ENCODE measurements at regions of chr2 and their contacts with region 1.

Region 1: DNA sequence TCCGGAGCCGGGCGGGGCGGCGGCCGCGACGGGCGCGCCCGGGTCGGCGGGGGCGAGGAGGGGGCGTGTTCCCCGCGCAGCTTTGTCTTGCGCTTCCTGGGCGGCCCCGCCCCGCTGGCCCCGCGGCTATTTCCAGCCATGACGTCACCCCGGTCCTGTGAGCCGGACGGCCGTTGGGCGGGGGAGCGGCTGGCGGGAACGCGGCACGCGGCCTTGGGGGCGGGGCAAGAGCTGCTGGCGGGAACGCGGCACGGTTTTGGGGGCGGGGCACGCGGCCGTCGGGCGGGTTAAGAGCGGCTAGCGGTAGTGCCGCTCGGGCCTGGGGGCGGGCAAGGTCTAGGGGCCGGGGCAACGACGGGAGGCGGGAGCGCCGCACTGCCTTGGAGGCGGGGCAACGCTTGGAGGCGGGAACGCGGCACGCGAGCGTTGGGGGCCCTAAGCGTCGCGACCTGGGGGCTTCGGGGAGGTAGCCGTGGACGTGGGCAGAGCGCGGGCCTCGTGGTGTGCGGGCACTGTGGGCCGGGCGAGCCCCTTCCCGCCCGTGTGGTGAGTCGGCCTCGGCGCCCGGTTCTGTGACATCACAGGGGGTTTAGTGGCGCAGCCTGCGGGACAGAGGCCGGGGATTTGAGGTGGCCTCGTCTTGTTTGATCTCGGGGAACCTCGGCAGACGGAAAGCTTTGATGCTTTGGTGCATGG is 704 bp downstream of the KLF11 start:
- DNase-seq: peak; percentile 97
- ATAC-seq: peak; percentile 61
- H3K4me3 ChIP-seq: peak overlapping the region in 4 of 5 experiments; percentile 40 to 68 (median 58)
- H3K4me3 Mint-ChIP-seq: peak overlapping the region; percentile 87
- H3K27ac ChIP-seq: peak overlapping the region; percentile 58 to 84
- H3K27ac Mint-ChIP-seq: peak overlapping the region; percentile 82
- H3K4me1 ChIP-seq: peaks cover 12 to 20% of the 10 kb centered on the region in 2 donors
- H3K4me1 Mint-ChIP-seq: peaks cover 26% of the 10 kb centered on the region
- H3K27me3 ChIP-seq: no peaks in the 10 kb centered on the region
- H3K27me3 Mint-ChIP-seq: no peaks in the 10 kb centered on the region
- CTCF ChIP-seq: no peak

Region 2: GRCh38 chr2:8836971-8837794 is 1206.9 kb before region 1 on chr2 and contains the start of gene KIDINS220:
- CTCF ChIA-PET with region 1: no interaction called
- POLR2A ChIA-PET with region 1: no interaction called
- intact Hi-C with region 1: loop called (anchors 10 kb)
- DNase-seq: peak; percentile 92
- ATAC-seq: peak; percentile 98
- H3K4me3 ChIP-seq: peak within 1 kb of the TSS; percentile 36 to 93 (median 84)
- H3K4me3 Mint-ChIP-seq: peak within 1 kb of the TSS; percentile 98
- H3K27ac ChIP-seq: peak within 1 kb of the TSS; percentile 36 to 75
- H3K27ac Mint-ChIP-seq: peak within 1 kb of the TSS; percentile 98
- H3K4me1 ChIP-seq: peaks cover 24 to 25% of the 10 kb centered on the region in 2 donors
- H3K4me1 Mint-ChIP-seq: peaks cover 36% of the 10 kb centered on the region
- H3K27me3 ChIP-seq: no peaks in the 10 kb centered on the region
- H3K27me3 Mint-ChIP-seq: peaks cover 4% of the 10 kb centered on the region
- CTCF ChIP-seq: no peak
- total RNA-seq, gene KIDINS220: 36.6 and 43.6 TPM in 2 replicates

Region 3: GRCh38 chr2:9630749-9631483 is 413.1 kb before region 1 on chr2 and contains the start of gene YWHAQ:
- CTCF ChIA-PET with region 1: no interaction called
- POLR2A ChIA-PET with region 1: interaction called, 3 read pairs
- intact Hi-C with region 1: loop called (anchors 1 kb)
- DNase-seq: peak; percentile 100
- ATAC-seq: peak; percentile 91
- H3K4me3 ChIP-seq: peak within 1 kb of the TSS; percentile 54 to 89 (median 69)
- H3K4me3 Mint-ChIP-seq: peak within 1 kb of the TSS; percentile 94
- H3K27ac ChIP-seq: peak within 1 kb of the TSS; percentile 76 to 92
- H3K27ac Mint-ChIP-seq: peak within 1 kb of the TSS; percentile 94
- H3K4me1 ChIP-seq: peaks cover 23 to 36% of the 10 kb centered on the region in 2 donors
- H3K4me1 Mint-ChIP-seq: peaks cover 46% of the 10 kb centered on the region
- H3K27me3 ChIP-seq: no peaks in the 10 kb centered on the region
- H3K27me3 Mint-ChIP-seq: no peaks in the 10 kb centered on the region
- CTCF ChIP-seq: no peak
- total RNA-seq, gene YWHAQ: 119 and 126 TPM in 2 replicates

Region 4: GRCh38 chr2:9843229-9844035 is 200.6 kb before region 1 on chr2 and contains the start of gene TAF1B:
- CTCF ChIA-PET with region 1: interaction called, 14 read pairs
- POLR2A ChIA-PET with region 1: interaction called, 5 read pairs
- intact Hi-C with region 1: loop called (anchors 1 kb)
- DNase-seq: peak; percentile 90
- ATAC-seq: peak; percentile 86
- H3K4me3 ChIP-seq: peak within 1 kb of the TSS; percentile 73 to 90 (median 84)
- H3K4me3 Mint-ChIP-seq: peak within 1 kb of the TSS; percentile 97
- H3K27ac ChIP-seq: peak within 1 kb of the TSS; percentile 51 to 72
- H3K27ac Mint-ChIP-seq: peak within 1 kb of the TSS; percentile 96
- H3K4me1 ChIP-seq: peaks cover 14 to 20% of the 10 kb centered on the region in 2 donors
- H3K4me1 Mint-ChIP-seq: peaks cover 31% of the 10 kb centered on the region
- H3K27me3 ChIP-seq: no peaks in the 10 kb centered on the region
- H3K27me3 Mint-ChIP-seq: no peaks in the 10 kb centered on the region
- CTCF ChIP-seq: peak; percentile 21
- total RNA-seq, gene TAF1B: 21.8 and 25.5 TPM in 2 replicates

Region 5: DNA sequence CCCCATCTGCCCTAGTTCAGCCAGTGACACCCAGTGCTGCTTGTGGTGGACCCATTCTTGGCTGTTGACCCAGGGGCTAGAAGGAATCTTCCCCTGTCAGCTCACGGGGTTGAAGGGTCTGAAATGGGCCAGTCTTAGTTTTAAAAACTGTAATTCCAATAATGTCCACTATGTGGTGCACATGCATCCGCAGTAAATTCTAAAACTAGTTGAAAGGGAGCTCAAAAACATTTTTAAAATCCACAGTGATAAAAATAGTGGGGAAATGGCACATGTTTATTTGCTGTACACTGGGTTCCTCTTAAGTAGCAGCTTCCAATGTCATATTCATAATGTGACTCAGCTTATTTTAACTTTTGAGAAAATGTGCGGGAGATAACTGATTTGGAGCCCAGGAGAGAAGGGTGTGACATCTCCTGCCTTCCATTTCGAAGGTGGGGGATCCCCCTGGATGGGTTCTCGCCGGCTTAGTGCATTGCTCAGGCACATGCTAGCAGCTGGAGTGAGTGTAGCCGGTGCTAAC is 59.8 kb before region 1 on chr2:
- CTCF ChIA-PET with region 1: interaction called, 319 read pairs
- POLR2A ChIA-PET with region 1: interaction called, 6 read pairs
- intact Hi-C with region 1: loop called (anchors 1 kb)
- DNase-seq: peak; percentile 81
- ATAC-seq: peak; percentile 81
- H3K4me3 ChIP-seq: no peak overlapping the region
- H3K4me3 Mint-ChIP-seq: no peak overlapping the region
- H3K27ac ChIP-seq: no peak overlapping the region
- H3K27ac Mint-ChIP-seq: no peak overlapping the region
- H3K4me1 ChIP-seq: peaks cover 5 to 6% of the 10 kb centered on the region in 2 donors
- H3K4me1 Mint-ChIP-seq: peaks cover 4% of the 10 kb centered on the region
- H3K27me3 ChIP-seq: peaks cover 0 to 5% (median 0%) of the 10 kb centered on the region in 4 experiments
- H3K27me3 Mint-ChIP-seq: peaks cover 15% of the 10 kb centered on the region
- CTCF ChIP-seq: peak; percentile 87

Region 6: GRCh38 chr2:10009811-10010292 is 34.2 kb before region 1 on chr2:
- CTCF ChIA-PET with region 1: no interaction called
- POLR2A ChIA-PET with region 1: no interaction called
- intact Hi-C with region 1: no loop called
- DNase-seq: no peak
- ATAC-seq: no peak
- H3K4me3 ChIP-seq: no peak overlapping the region
- H3K4me3 Mint-ChIP-seq: no peak overlapping the region
- H3K27ac ChIP-seq: no peak overlapping the region
- H3K27ac Mint-ChIP-seq: no peak overlapping the region
- H3K4me1 ChIP-seq: no peaks in the 10 kb centered on the region
- H3K4me1 Mint-ChIP-seq: no peaks in the 10 kb centered on the region
- H3K27me3 ChIP-seq: peaks cover 0 to 8% (median 0%) of the 10 kb centered on the region in 4 experiments
- H3K27me3 Mint-ChIP-seq: no peaks in the 10 kb centered on the region
- CTCF ChIP-seq: no peak

Region 7: DNA sequence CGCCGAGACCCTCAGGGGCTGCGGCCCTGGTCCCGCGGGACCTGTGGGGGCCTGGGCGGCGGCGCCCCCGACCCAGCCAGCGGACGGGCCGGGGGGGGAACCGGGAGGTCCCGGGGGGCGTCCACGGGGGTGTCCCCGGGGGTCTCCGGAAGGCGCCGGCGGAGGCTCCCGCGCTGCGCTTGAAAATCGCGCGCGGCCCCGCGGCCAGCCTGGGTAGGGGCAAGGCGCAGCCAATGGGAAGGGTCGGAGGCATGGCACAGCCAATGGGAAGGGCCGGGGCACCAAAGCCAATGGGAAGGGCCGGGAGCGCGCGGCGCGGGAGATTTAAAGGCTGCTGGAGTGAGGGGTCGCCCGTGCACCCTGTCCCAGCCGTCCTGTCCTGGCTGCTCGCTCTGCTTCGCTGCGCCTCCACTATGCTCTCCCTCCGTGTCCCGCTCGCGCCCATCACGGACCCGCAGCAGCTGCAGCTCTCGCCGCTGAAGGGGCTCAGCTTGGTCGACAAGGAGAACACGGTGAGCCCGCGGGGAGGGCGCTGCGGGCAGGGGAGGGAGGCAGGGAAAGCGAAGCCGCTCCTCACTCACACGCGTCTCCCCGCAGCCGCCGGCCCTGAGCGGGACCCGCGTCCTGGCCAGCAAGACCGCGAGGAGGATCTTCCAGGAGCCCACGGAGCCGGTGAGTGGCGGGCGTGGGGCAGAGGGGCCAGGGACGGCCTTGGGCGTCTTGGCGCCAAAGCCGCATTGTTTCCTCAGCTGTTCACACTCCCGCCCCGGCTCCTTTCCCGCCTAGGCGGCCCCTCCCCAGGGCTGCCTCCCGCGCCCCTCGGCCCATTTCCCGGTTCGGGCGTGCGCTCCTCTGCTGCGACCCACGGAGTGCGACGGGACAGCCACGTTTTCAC is 78.6 kb after region 1 on chr2 and contains the start of gene RRM2:
- CTCF ChIA-PET with region 1: no interaction called
- POLR2A ChIA-PET with region 1: no interaction called
- intact Hi-C with region 1: loop called (anchors 1 kb)
- DNase-seq: peak; percentile 91
- ATAC-seq: peak; percentile 82
- H3K4me3 ChIP-seq: peak within 1 kb of the TSS in 4 of 5 experiments; percentile 42 to 77 (median 54)
- H3K4me3 Mint-ChIP-seq: peak within 1 kb of the TSS; percentile 98
- H3K27ac ChIP-seq: no peak within 1 kb of the TSS
- H3K27ac Mint-ChIP-seq: peak within 1 kb of the TSS; percentile 59
- H3K4me1 ChIP-seq: peaks cover 29 to 32% of the 10 kb centered on the region in 2 donors
- H3K4me1 Mint-ChIP-seq: peaks cover 30% of the 10 kb centered on the region
- H3K27me3 ChIP-seq: peaks cover 0 to 17% (median 8%) of the 10 kb centered on the region in 4 experiments
- H3K27me3 Mint-ChIP-seq: peaks cover 10% of the 10 kb centered on the region
- CTCF ChIP-seq: no peak
- total RNA-seq, gene RRM2: 1.2 and 1.3 TPM in 2 replicates

Measured in B cell (primary cell).